Sciatic nerve (tissue), 2 donors: ENCODE measurements at regions of chr1 and their contacts with region 1.

Region 1: DNA sequence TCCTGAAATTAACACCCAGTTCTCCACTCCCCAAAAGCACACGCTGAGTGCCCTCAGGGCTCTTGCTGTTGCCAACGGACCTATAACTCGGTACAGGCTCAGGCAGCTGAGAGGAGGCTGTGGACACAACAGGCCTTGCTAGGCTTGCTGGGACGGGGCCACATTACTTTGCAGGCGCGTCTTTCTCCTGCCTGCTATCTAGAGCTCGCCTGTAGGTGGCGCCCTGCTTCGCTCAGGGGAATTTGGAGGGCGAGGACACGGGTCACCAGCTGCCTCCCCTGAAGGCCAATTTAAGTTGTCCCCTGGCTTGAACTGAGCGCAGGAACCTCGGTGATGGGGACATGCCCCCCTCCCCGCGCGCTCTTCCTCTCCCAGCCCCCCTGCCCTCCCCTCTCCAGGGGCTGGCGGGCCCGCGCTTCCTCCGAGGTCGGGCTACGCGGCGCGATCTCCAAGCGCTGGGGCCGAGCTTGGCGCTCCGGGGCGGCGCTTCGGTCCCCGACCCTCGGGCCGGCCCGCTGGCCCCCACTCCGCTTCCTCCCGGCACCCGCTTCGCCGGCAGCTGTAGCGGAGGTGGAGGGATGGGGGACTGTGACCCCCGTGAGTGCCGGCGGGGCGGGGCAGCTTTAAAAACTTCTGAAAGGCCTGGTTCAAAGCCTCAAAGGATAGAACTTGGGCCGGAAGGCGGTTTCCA is 32.4 kb upstream of the NFIA start:
- DNase-seq: peak; percentile 97
- ATAC-seq: peak; percentile 88

Region 2: GRCh38 chr1:60848583-60849188 is 201.3 kb before region 1 on chr1:
- intact Hi-C with region 1: loop called (anchors 10 kb)
- DNase-seq: no peak
- ATAC-seq: no peak

Region 3: GRCh38 chr1:60989749-60990713 is 60.0 kb before region 1 on chr1:
- intact Hi-C with region 1: loop called (anchors 10 kb)
- DNase-seq: peak; percentile 85
- ATAC-seq: peak; percentile 90

Region 4: DNA sequence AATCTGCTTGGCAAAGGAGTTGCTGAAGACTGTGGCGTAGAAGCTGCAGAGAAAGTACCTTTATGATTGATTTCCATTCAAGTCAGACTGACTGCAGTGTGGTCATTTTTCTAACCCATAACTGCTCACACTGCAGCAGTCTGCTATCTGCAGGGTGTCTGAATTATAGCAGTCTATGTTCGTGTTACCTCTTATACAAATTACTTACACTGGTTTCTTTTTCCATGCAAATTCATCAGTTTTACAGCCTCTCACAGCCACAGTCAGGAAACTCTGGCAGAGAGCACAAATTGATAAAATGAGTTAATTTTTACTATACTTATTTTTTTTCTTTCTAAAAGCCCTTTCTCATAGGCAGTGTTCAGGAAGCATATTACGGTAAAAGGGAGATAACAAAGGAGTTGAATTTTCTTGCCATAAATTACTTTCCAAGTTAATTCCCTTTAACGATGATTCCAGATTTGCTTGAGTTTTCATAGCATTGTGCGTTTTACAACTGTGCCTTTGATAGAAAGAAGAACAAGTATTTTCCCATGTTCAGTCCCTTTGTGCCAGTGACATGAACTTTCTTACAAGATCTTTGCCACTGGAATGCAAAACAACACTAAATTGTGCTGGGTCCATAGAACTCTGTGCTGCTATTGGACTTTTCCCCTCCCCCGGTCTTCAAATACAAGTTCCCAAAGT is 293.9 kb after region 1 on chr1:
- intact Hi-C with region 1: loop called (anchors 10 kb)
- DNase-seq: no peak
- ATAC-seq: peak; percentile 54

Region 5: GRCh38 chr1:61453111-61453961 is 403.3 kb after region 1 on chr1:
- intact Hi-C with region 1: loop called (anchors 10 kb)
- DNase-seq: peak; percentile 93
- ATAC-seq: peak; percentile 84